Natural killer cell (primary cell): ENCODE measurements at regions of chr9 and their contacts with region 1.

Region 1: DNA sequence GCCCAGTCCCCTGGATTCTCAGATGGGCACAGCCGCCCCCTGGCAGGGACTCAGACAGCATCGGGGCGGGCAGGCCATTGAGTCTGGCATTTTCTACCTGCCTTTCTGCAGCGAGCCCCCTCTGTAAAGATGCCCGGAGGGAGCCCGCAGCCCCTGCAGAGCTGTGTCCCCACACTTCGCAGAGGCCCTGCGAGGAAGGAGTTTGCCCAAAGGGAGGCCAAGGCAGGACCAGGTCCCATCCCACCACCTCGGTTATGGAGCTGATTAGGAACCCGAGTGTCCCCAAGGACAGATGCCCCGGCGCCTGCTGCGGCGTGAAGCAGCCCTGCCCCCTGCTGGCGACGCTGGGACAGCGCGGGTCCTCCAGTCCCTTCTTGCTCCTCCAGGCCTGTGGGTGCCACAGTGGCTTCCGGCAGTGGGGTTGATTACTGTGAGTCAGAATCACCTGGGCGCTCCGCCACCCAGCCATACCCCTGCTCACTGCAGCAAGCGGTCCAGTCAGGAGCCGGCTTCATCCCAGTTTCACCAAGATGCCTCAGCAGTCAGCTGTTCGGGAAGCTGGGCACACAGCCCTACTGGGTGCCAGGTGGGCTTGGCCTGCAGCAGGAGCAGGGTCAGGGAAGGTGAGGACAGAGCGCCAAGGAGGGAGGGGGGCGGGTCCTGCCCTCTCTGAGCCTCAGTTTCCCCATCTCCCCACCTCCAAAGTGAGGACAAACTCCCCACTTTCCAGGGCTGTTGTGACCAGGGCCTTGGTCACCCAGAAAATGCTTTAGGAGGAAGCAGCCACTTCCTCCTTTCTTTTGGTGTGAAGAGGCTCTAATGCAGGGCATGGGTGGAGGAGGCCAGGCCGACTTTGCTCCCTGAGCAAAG is 117.1 kb downstream of the RXRA start:
- DNase-seq: peak; percentile 86 to 94
- ATAC-seq: peak; percentile 98
- H3K4me3 ChIP-seq: no peak overlapping the region
- H3K4me3 Mint-ChIP-seq: peak overlapping the region; percentile 53
- H3K27ac ChIP-seq: peak overlapping the region; percentile 63
- H3K27ac Mint-ChIP-seq: peak overlapping the region; percentile 31 to 86
- H3K4me1 ChIP-seq: peaks cover 25% of the 10 kb centered on the region
- H3K4me1 Mint-ChIP-seq: peaks cover 16 to 37% of the 10 kb centered on the region in 2 donors
- H3K27me3 ChIP-seq: peaks cover 12% of the 10 kb centered on the region
- H3K27me3 Mint-ChIP-seq: peaks cover 0 to 5% of the 10 kb centered on the region in 2 donors
- CTCF ChIP-seq: peak; percentile 98

Region 2: GRCh38 chr9:134171316-134172197 is 271.8 kb before region 1 on chr9:
- intact Hi-C with region 1: loop called (anchors 1 kb)
- DNase-seq: no peak
- ATAC-seq: no peak
- H3K4me3 ChIP-seq: no peak overlapping the region
- H3K4me3 Mint-ChIP-seq: no peak overlapping the region
- H3K27ac ChIP-seq: no peak overlapping the region
- H3K27ac Mint-ChIP-seq: no peak overlapping the region
- H3K4me1 ChIP-seq: peaks cover 27% of the 10 kb centered on the region
- H3K4me1 Mint-ChIP-seq: no peaks in the 10 kb centered on the region
- H3K27me3 ChIP-seq: no peaks in the 10 kb centered on the region
- H3K27me3 Mint-ChIP-seq: peaks cover 0 to 3% of the 10 kb centered on the region in 2 donors
- CTCF ChIP-seq: no peak

Region 3: DNA sequence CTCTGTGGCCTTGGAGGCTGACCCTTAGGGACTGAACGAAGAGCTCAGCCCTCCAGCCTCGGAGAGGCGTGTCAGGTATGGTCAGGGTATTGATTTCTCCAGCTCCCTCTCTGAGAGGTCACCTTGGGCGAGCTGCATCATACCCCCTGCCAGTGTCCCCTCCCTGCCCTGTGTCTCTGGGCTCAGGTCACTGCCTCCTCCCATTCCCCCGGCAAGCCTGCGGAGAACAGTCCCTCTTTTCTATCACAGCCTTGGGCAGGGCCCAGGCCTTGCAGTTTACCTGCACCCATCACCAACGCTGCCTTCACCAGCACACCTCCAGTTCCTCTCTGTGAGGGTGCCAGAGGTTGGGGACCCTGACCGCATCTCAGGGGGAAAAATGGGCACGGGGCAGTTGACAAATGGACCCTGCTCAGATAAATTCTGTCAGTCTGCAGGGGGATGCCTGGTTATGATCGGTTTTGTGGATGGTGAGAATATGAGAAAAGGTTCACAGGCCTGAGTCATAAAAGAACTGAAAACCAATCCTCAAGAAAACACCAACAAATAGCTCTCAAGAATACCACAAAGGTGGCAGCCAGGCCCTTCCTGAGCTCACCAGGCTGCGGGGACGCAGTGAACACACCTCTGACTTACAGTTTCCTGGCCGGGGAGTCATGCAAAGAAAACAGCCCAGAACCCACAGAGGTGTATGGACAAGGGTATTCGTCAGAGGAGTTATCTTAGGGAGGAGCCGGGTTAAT is 141.8 kb before region 1 on chr9:
- intact Hi-C with region 1: loop called (anchors 2 kb)
- DNase-seq: peak; percentile 57 to 77
- ATAC-seq: peak; percentile 91 to 97 (median 92)
- H3K4me3 ChIP-seq: no peak overlapping the region
- H3K4me3 Mint-ChIP-seq: peak overlapping the region; percentile 49
- H3K27ac ChIP-seq: peak overlapping the region; percentile 64
- H3K27ac Mint-ChIP-seq: peak overlapping the region; percentile 53 to 67
- H3K4me1 ChIP-seq: peaks cover 29% of the 10 kb centered on the region
- H3K4me1 Mint-ChIP-seq: peaks cover 6 to 19% of the 10 kb centered on the region in 2 donors
- H3K27me3 ChIP-seq: peaks cover 10% of the 10 kb centered on the region
- H3K27me3 Mint-ChIP-seq: peaks cover 0 to 9% of the 10 kb centered on the region in 2 donors
- CTCF ChIP-seq: no peak

Region 4: GRCh38 chr9:134381671-134382516 is 61.5 kb before region 1 on chr9:
- intact Hi-C with region 1: loop called (anchors 5 kb)
- DNase-seq: peak; percentile 69 to 78
- ATAC-seq: peak; percentile 70 to 85 (median 82)
- H3K4me3 ChIP-seq: peak overlapping the region; percentile 31
- H3K4me3 Mint-ChIP-seq: peak overlapping the region; percentile 90
- H3K27ac ChIP-seq: no peak overlapping the region
- H3K27ac Mint-ChIP-seq: peak overlapping the region; percentile 85 to 97
- H3K4me1 ChIP-seq: peaks cover 83% of the 10 kb centered on the region
- H3K4me1 Mint-ChIP-seq: peaks cover 38 to 59% of the 10 kb centered on the region in 2 donors
- H3K27me3 ChIP-seq: no peaks in the 10 kb centered on the region
- H3K27me3 Mint-ChIP-seq: no peaks in the 10 kb centered on the region
- CTCF ChIP-seq: peak; percentile 78

Region 5: GRCh38 chr9:134407123-134407808 is 36.1 kb before region 1 on chr9:
- intact Hi-C with region 1: loop called (anchors 5 kb)
- DNase-seq: peak; percentile 78 to 89
- ATAC-seq: peak; percentile 86 to 89 (median 87)
- H3K4me3 ChIP-seq: peak overlapping the region; percentile 27
- H3K4me3 Mint-ChIP-seq: peak overlapping the region; percentile 79
- H3K27ac ChIP-seq: peak overlapping the region; percentile 28
- H3K27ac Mint-ChIP-seq: peak overlapping the region; percentile 59 to 80
- H3K4me1 ChIP-seq: peaks cover 91% of the 10 kb centered on the region
- H3K4me1 Mint-ChIP-seq: peaks cover 40 to 70% of the 10 kb centered on the region in 2 donors
- H3K27me3 ChIP-seq: no peaks in the 10 kb centered on the region
- H3K27me3 Mint-ChIP-seq: no peaks in the 10 kb centered on the region
- CTCF ChIP-seq: no peak

Region 6: GRCh38 chr9:134484479-134484878 is 41.1 kb after region 1 on chr9:
- intact Hi-C with region 1: no loop called
- DNase-seq: no peak
- ATAC-seq: no peak
- H3K4me3 ChIP-seq: no peak overlapping the region
- H3K4me3 Mint-ChIP-seq: no peak overlapping the region
- H3K27ac ChIP-seq: no peak overlapping the region
- H3K27ac Mint-ChIP-seq: no peak overlapping the region
- H3K4me1 ChIP-seq: peaks cover 4% of the 10 kb centered on the region
- H3K4me1 Mint-ChIP-seq: no peaks in the 10 kb centered on the region
- H3K27me3 ChIP-seq: no peaks in the 10 kb centered on the region
- H3K27me3 Mint-ChIP-seq: peaks cover 0 to 8% of the 10 kb centered on the region in 2 donors
- CTCF ChIP-seq: no peak